ENCODE measurements at regions of chr19 and their contacts with region 1.

Region 1: DNA sequence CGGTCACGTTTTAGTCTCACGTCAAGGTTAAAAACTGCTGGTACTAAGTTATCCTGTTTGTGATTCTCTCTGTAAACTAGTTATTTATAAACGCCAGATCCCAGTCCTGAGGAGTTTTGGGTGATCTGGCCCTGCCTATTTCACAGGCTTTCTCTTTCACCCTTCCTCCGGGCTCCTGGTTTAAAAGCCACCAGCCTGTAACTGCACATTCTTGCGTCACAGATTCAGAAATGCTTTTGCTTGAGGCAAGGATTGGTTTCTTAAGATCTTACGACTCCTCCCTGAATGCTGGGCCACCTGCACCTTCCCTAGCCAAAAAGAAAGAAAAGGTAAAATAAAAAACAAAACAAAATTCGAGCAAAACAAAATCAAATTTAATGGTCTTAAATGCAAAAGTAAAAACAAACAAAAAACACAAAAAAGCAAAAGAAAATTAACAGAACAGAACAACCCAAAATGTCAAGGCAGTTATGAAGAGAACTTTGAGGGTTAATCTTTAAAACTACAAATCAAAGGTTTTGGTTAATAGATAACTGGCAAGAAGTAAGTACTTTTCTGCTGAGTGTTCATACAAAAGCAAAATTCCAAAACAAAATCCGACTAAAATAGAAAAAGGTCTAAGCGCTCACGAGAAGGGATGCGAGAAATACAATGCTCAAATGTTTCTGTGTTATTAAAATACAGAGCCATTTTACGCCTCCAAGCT is 18.6 kb upstream of the TIMM44 start:
- H3K4me3 ChIP-seq: no peak overlapping the region
- H3K27ac ChIP-seq: no peak overlapping the region; the same call in 1 of the 2 replicates
- H3K4me1 ChIP-seq: no peaks in the 10 kb centered on the region
- CTCF ChIP-seq: no peak

Region 2: GRCh38 chr19:7930765-7931164 is 31.3 kb before region 1 on chr19:
- CTCF ChIA-PET with region 1: no interaction called
- POLR2A ChIA-PET with region 1: interaction called, 10 read pairs
- H3K4me3 ChIP-seq: no peak overlapping the region
- H3K27ac ChIP-seq: no peak overlapping the region
- H3K4me1 ChIP-seq: peaks cover 17% of the 10 kb centered on the region
- CTCF ChIP-seq: no peak

Region 3: DNA sequence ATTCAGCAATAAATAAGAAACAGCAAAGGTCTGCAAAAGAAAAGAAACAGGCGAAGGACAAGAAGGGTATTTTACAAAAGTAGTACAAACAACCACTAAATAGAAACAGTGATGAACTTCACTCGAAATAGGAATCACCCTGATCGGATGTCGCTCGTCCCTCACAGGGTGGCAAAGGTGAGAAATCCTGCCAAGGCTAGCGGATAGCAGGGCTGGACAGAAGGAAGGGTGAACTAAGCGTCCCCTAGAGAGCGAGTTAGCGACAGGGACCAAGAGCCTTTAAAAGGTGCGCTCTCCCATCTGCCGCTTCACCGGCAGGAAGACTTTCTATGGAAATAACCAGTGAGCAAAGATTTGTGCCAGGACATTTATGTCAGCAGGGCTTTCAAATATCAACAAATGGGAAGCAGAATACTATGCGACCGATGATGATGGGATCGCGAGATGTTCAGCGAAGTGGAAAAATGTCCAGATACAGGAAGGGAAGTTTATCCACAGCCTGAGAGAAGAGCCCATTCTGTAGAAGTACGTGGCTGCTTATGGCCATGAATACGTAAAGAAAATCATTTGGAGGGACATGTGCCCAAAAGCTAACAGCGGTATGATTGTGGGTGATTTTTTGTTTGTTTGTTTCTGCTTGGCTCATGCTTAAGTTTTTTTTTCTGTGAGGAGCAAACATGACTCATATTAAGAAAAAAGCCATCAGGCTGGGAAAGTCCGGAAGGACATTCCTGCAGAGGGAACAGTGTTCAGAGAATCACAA is 24.4 kb after region 1 on chr19:
- CTCF ChIA-PET with region 1: no interaction called
- POLR2A ChIA-PET with region 1: no interaction called
- H3K4me3 ChIP-seq: no peak overlapping the region
- H3K27ac ChIP-seq: no peak overlapping the region
- H3K4me1 ChIP-seq: no peaks in the 10 kb centered on the region
- CTCF ChIP-seq: no peak

Region 4: GRCh38 chr19:8017808-8018207 is 55.7 kb after region 1 on chr19:
- CTCF ChIA-PET with region 1: no interaction called
- POLR2A ChIA-PET with region 1: no interaction called
- H3K4me3 ChIP-seq: no peak overlapping the region
- H3K27ac ChIP-seq: no peak overlapping the region
- H3K4me1 ChIP-seq: no peaks in the 10 kb centered on the region
- CTCF ChIP-seq: no peak